Activated CD4-positive, alpha-beta T cell treated with anti-CD3 and anti-CD28 coated beads for 36 hours (primary cell): ENCODE measurements at regions of chr12 and their contacts with region 1.

Region 1: GRCh38 chr12:48512855-48513254 is 12.6 kb upstream of the OR8S1 start:
- DNase-seq: peak; percentile 29
- ATAC-seq: peak; percentile 98
- H3K4me3 Mint-ChIP-seq: no peak overlapping the region
- H3K27ac Mint-ChIP-seq: peak overlapping the region; percentile 73
- H3K4me1 Mint-ChIP-seq: peaks cover 13% of the 10 kb centered on the region
- H3K27me3 Mint-ChIP-seq: peaks cover 7% of the 10 kb centered on the region

Region 2: GRCh38 chr12:48388430-48388829 is 124.4 kb before region 1 on chr12:
- CTCF ChIA-PET with region 1: no interaction called
- POLR2A ChIA-PET with region 1: no interaction called
- intact Hi-C with region 1: no loop called
- DNase-seq: no peak
- ATAC-seq: no peak
- H3K4me3 Mint-ChIP-seq: no peak overlapping the region
- H3K27ac Mint-ChIP-seq: no peak overlapping the region
- H3K4me1 Mint-ChIP-seq: no peaks in the 10 kb centered on the region
- H3K27me3 Mint-ChIP-seq: peaks cover 15% of the 10 kb centered on the region

Region 3: DNA sequence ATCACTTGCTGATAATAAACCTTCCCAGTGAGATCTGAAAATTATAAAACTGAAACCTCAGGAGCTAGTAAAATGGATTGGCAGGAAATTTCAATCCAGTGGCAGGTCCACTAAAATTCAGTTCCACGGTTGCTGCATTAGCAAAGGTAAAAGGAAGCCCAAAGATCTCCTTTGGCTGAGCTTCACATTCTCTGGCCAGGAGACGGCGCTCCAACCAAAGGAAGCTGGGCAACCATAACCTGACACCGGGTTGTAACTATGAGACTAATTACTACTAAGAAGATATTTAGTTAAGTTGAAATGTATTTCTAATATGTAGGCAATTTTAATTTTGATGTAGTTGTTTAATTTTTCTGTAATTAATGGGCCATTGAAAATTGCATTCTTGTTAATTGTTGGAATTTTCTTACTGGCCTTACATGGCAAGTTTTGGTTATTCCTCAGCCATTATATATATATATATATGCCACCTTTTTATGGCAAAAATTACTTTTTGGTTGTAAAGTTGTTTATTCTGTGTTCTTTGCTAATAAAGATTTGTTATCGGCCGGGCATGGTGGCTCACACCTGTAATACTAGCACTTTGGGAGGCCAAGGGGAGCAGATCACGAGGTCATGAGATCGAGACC is 29.6 kb after region 1 on chr12:
- CTCF ChIA-PET with region 1: no interaction called
- POLR2A ChIA-PET with region 1: no interaction called
- intact Hi-C with region 1: loop called in 1 of 2 experiments (anchors 2 kb)
- DNase-seq: peak; percentile 80
- ATAC-seq: peak; percentile 55
- H3K4me3 Mint-ChIP-seq: no peak overlapping the region
- H3K27ac Mint-ChIP-seq: no peak overlapping the region
- H3K4me1 Mint-ChIP-seq: peaks cover 11% of the 10 kb centered on the region
- H3K27me3 Mint-ChIP-seq: no peaks in the 10 kb centered on the region